H1 (cell line): ENCODE measurements at regions of chr10 and their contacts with region 1.

Region 1: GRCh38 chr10:101095542-101096213 is 33.9 kb downstream of the KAZALD1 start:
- DNase-seq: peak; percentile 96
- H3K4me3 ChIP-seq: peak overlapping the region in 1 of 4 experiments; percentile 19; a peak in 1 of 8 replicates
- H3K27ac ChIP-seq: no peak overlapping the region
- H3K4me1 ChIP-seq: peaks cover 3 to 15% (median 8%) of the 10 kb centered on the region in 4 experiments; a peak in 5 of 7 replicates
- H3K27me3 ChIP-seq: peaks cover 0 to 25% (median 10%) of the 10 kb centered on the region in 4 experiments; a peak in 4 of 7 replicates
- CTCF ChIP-seq: peak; percentile 89 to 99 (median 92)
- EP300 ChIP-seq: no peak
- POLR2A ChIP-seq: no peak
- RAD21 ChIP-seq: peak; percentile 68 to 83

Region 2: DNA sequence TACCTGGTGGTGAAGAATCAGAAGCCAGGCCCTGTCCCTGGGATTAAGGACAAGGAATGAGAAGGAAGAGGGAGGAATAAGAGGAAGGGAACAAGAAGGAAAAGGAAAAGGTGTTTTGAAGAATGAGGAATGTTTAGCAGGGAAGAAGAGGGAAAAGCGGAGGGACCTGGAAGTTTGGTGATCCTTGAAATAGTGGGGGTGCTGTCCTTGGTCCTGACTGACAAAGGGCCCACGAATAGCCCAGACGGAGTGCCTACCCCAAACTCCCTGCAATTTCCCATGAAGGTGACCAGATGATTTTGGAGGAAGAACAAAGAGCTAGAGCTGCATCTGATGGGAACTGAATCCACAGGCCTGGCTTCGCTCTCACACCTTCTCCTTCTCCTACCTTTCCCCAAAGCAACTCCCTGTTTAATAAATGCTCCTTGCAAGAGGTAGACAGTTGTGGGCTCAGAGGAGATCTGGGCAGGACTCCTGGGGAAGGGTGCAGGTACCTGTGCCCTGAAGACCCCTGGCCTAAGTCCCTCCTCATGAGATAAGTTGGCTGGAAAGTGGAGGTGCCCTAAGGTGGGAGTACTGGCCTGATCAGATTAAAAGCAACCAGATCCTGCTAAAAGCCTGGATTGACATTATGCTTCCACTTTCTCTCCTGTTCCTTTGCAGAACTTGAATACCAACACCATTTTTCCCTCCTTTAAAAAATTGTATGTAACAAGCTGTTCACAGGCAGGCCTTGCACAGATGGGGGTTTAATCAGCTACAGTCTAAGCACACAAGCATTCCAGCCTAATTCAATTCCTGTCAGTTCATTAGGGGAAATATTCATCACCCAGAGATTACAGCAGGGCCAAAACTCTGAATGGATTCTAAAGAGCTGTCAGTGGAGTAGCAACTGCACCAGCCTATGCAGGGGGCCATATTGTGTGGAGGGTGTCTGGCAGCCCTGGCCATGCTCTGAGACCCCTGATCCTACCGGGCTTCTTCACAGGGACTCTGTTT is 14.4 kb before region 1 on chr10:
- CTCF ChIA-PET with region 1: interaction called, 323 read pairs
- POLR2A ChIA-PET with region 1: no interaction called
- DNase-seq: no peak
- H3K4me3 ChIP-seq: no peak overlapping the region
- H3K27ac ChIP-seq: no peak overlapping the region
- H3K4me1 ChIP-seq: peaks cover 0 to under 1% (median under 1%) of the 10 kb centered on the region in 4 experiments; a peak in 3 of 7 replicates
- H3K27me3 ChIP-seq: peaks cover 0 to 22% (median 11%) of the 10 kb centered on the region in 4 experiments; a peak in 4 of 7 replicates
- CTCF ChIP-seq: no peak
- EP300 ChIP-seq: no peak
- POLR2A ChIP-seq: no peak
- RAD21 ChIP-seq: no peak

Region 3: GRCh38 chr10:101110856-101111546 is 15.3 kb after region 1 on chr10:
- CTCF ChIA-PET with region 1: interaction called, 323 read pairs
- POLR2A ChIA-PET with region 1: interaction called, 4 read pairs
- DNase-seq: no peak
- H3K4me3 ChIP-seq: no peak overlapping the region
- H3K27ac ChIP-seq: no peak overlapping the region
- H3K4me1 ChIP-seq: peaks cover 0 to 15% (median 4%) of the 10 kb centered on the region in 4 experiments; a peak in 6 of 7 replicates
- H3K27me3 ChIP-seq: peaks cover 0 to 6% (median 2%) of the 10 kb centered on the region in 4 experiments; a peak in 3 of 7 replicates
- CTCF ChIP-seq: no peak
- EP300 ChIP-seq: no peak
- POLR2A ChIP-seq: no peak
- RAD21 ChIP-seq: no peak